Heart right ventricle (tissue), 16 donors: ENCODE measurements at regions of chr4 and their contacts with region 1.

Region 1: DNA sequence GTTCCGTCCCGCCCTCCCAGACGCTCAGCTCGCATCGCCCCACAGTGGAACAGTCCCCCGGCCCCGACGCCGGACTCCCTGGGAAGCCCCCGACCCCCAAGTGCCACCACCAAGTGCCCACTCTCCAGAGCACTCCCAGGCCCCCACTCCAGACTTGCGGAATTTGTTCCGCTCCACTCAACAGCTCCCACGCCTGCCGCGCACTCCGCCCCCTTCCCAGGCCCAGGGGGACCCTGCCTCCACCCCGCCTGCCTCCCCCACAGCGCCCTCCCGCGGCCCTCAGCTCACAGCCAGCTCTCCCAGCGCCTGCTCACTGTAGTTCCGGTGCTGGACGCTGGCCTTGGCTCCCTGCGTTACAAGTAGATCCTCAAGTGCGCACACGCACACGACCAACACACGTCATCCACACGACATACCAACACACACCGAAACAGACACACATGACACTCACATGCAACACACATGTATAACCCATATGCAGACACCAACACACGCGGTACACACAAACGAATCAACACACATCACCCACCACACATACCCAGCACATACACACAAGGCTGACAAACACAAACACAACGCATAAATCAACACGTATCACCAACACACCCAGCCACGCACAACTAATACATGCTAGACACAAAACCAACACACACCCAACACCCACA is 8.0 kb downstream of the MSX1 start:
- DNase-seq: peak; percentile 41 to 46
- ATAC-seq: peak; percentile 34 to 76 (median 64)
- H3K4me3 ChIP-seq: peak overlapping the region in 9 of 10 donors; percentile 19 to 49 (median 37)
- H3K27ac ChIP-seq: peak overlapping the region in 1 of 10 donors; percentile 19
- H3K4me1 ChIP-seq: peaks cover 2 to 66% (median 25%) of the 10 kb centered on the region in 9 donors
- H3K27me3 ChIP-seq: peaks cover 79 to 100% (median 100%) of the 10 kb centered on the region in 7 donors
- CTCF ChIP-seq: peak in 7 of 9 donors; percentile 5 to 46 (median 29)

Region 2: GRCh38 chr4:4541661-4542570 is 325.6 kb before region 1 on chr4 and contains the start of gene STX18:
- intact Hi-C with region 1: loop called in 1 of 10 experiments (anchors 5 kb)
- DNase-seq: peak; percentile 85 to 89
- ATAC-seq: peak; percentile 98 to 99 (median 99)
- H3K4me3 ChIP-seq: peak within 1 kb of the TSS; percentile 77 to 99 (median 92)
- H3K27ac ChIP-seq: peak within 1 kb of the TSS in 9 of 10 donors; percentile 74 to 92 (median 85)
- H3K4me1 ChIP-seq: peaks cover 3 to 39% (median 31%) of the 10 kb centered on the region in 9 donors
- H3K27me3 ChIP-seq: no peaks in the 10 kb centered on the region
- CTCF ChIP-seq: peak in 1 of 9 donors; percentile 16
- total RNA-seq, gene STX18: 13.5 to 22.5 (median 18.0) TPM

Region 3: DNA sequence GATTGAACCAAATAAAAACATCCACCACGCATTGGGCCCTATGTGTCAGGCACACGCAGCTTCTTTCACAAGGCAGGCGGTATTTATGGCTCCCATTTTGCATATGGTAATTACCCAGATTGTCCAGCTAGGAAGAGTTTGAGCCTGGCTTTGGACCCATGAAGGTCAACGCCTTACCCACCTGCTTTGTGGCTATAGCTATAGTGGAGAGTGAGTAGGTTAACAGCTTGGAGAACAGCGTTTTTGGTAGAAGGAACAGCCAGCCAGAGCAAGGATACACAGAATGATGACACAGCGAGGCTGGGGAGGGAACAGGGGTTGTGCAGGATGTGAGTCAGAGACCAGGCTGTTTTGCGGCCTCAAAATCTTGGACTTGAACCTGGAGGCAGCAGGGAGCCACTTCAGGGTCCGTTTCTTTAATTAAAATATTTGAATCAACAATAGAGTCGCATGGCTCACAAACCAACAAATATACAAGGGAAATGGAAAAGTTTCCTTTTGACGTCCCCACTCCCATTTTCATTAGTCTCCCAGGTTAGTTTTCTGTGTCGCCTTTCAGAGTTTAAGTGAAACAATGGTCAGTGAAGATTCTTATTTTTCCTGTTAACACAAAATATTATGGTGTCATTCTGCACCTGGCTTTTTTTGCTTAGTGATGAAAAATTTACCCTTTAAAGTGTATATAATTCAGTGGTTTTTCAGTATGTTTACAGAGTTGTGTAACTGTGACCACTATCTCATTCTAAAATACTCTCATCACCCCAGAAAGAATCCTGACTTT is 207.4 kb before region 1 on chr4:
- intact Hi-C with region 1: loop called in 1 of 10 experiments (anchors 10 kb)
- DNase-seq: no peak
- ATAC-seq: no peak
- H3K4me3 ChIP-seq: no peak overlapping the region
- H3K27ac ChIP-seq: no peak overlapping the region
- H3K4me1 ChIP-seq: no peaks in the 10 kb centered on the region
- H3K27me3 ChIP-seq: no peaks in the 10 kb centered on the region
- CTCF ChIP-seq: no peak

Region 4: GRCh38 chr4:4677556-4678522 is 189.7 kb before region 1 on chr4:
- intact Hi-C with region 1: loop called in 1 of 10 experiments (anchors 10 kb)
- DNase-seq: peak in 1 of 2 donors; percentile 5
- ATAC-seq: peak in 1 of 8 donors; percentile 61
- H3K4me3 ChIP-seq: peak overlapping the region in 2 of 10 donors; percentile 1 to 10
- H3K27ac ChIP-seq: no peak overlapping the region
- H3K4me1 ChIP-seq: no peaks in the 10 kb centered on the region
- H3K27me3 ChIP-seq: no peaks in the 10 kb centered on the region
- CTCF ChIP-seq: peak; percentile 5 to 63 (median 57)